Activated CD4-positive, alpha-beta memory T cell treated with anti-CD3 and anti-CD28 coated beads, Interleukin-2, amount 10 ng/mL, durations not matched to agents 7 days and 5 days (primary cell): ENCODE measurements at regions of chr16 and their contacts with region 1.

Region 1: GRCh38 chr16:53346-54236 is at the starts of genes POLR3K and SNRNP25:
- DNase-seq: peak; percentile 98
- H3K4me3 Mint-ChIP-seq: peak within 1 kb of the TSS; percentile 98
- H3K27ac Mint-ChIP-seq: peak within 1 kb of the TSS; percentile 86
- H3K4me1 Mint-ChIP-seq: peaks cover 34% of the 10 kb centered on the region
- H3K27me3 Mint-ChIP-seq: no peaks in the 10 kb centered on the region
- total RNA-seq, gene POLR3K: 27.6 to 31.1 TPM
- total RNA-seq, gene SNRNP25: 29.7 to 33.4 TPM

Region 2: GRCh38 chr16:38939-39892 is 14.4 kb before region 1 on chr16:
- CTCF ChIA-PET with region 1: interaction called, 5 read pairs
- POLR2A ChIA-PET with region 1: interaction called, 16 read pairs
- DNase-seq: peak; percentile 80
- H3K4me3 Mint-ChIP-seq: no peak overlapping the region
- H3K27ac Mint-ChIP-seq: peak overlapping the region; percentile 47
- H3K4me1 Mint-ChIP-seq: peaks cover 46% of the 10 kb centered on the region
- H3K27me3 Mint-ChIP-seq: no peaks in the 10 kb centered on the region

Region 3: DNA sequence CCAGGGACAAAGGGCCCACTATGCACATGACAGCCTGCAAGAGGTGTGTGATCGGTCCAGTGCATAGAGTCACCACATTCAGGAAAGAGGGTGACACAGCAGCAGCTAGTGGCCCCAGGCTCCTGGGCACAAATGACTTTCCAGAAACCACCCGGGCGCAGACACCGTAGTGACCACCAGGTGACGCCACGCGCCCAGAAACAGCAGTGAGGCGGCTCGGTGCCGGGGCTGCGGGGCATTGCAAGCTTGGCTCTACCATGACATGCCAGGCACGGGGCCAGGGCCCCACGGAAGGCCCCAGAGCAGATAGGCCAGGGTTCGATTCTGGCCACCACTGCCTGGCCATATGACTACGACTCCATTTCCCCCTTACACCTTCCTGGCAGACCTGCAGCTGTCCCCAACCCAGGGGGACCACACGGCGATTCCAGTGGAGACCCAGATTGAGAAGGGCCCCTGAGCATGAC is 12.1 kb after region 1 on chr16:
- CTCF ChIA-PET with region 1: interaction called, 21 read pairs
- POLR2A ChIA-PET with region 1: interaction called, 11 read pairs
- DNase-seq: peak; percentile 89
- H3K4me3 Mint-ChIP-seq: no peak overlapping the region
- H3K27ac Mint-ChIP-seq: no peak overlapping the region
- H3K4me1 Mint-ChIP-seq: peaks cover 2% of the 10 kb centered on the region
- H3K27me3 Mint-ChIP-seq: peaks cover 13% of the 10 kb centered on the region

Region 4: DNA sequence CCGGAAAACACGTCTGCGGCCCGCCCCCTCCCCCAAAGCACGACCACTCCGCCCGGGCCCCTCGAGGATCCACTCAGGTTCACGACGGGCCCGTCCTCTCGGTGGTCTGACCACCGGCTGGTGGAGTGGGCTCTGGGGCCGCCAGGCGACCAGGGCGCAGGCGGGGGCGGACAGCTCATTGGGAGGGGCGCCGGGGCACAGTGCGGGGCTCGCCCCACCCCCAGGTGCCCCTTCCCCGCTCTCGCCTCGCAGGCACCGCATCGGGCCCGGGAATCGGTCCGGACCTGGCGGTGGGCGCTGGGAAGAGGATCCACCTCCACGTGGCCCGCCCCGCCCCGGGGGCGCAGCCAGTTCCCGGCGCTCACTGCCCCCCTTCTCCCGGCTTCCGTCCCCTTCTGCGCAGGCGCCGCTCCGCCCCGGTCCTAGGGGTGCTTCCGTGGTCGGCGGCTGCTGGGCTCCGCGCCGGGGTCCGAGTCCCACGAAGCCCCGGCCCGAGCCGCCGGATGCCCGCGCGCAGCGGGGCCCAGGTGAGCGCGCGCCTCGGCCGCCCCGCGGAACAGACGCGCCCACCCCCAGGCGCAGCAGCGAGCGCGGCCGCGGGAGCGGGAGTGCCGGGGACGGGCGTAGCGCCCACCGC is 24.3 kb after region 1 on chr16 and contains the start of gene MPG:
- CTCF ChIA-PET with region 1: interaction called, 3 read pairs
- POLR2A ChIA-PET with region 1: interaction called, 18 read pairs
- DNase-seq: peak; percentile 85
- H3K4me3 Mint-ChIP-seq: peak within 1 kb of the TSS; percentile 84
- H3K27ac Mint-ChIP-seq: peak within 1 kb of the TSS; percentile 82
- H3K4me1 Mint-ChIP-seq: peaks cover 33% of the 10 kb centered on the region
- H3K27me3 Mint-ChIP-seq: peaks cover 18% of the 10 kb centered on the region
- total RNA-seq, gene MPG: 59.9 to 64.3 TPM

Region 5: DNA sequence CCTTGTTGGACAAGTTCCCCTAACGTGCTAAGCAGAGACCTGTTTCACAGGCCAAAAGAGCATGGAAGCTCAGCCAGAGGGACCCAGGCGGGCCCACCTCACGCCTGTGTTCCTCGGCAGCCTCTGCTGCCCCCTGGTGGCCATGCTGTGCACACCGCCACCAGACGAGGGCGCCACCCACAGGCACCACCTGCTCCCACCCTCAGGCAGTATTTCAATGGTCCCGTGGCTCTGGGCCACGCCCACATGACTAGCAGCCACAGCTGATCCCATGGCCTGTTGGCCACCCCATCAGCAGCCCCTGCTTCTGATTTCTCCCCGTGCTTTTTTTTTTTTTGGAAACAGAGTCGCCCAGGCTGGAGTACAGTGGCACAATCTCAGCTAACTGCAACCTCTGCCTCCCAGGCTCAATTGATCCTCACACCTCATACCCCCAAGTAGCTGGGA is 43.4 kb after region 1 on chr16:
- CTCF ChIA-PET with region 1: interaction called, 12 read pairs
- POLR2A ChIA-PET with region 1: no interaction called
- DNase-seq: peak; percentile 92
- H3K4me3 Mint-ChIP-seq: no peak overlapping the region
- H3K27ac Mint-ChIP-seq: no peak overlapping the region
- H3K4me1 Mint-ChIP-seq: peaks cover 5% of the 10 kb centered on the region
- H3K27me3 Mint-ChIP-seq: no peaks in the 10 kb centered on the region

Region 6: DNA sequence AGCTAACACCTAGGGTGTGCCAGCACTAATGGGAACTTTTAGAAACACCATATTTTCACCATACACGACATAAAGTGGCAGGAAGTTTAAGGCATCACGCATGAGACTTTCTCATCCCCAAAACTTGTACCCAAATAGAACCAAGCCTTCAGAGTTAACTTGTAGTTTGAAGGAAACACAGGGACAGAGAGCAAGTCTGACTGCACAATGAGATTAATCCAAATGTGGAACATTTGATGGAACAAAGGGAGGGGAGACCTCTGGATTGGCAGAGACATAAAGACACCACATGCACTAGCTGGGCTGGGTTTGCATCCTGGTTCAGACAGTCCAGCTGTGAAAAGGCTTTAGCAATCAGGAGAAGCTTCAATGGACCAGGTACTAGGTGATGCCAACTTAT is 60.7 kb after region 1 on chr16:
- CTCF ChIA-PET with region 1: no interaction called
- POLR2A ChIA-PET with region 1: no interaction called
- DNase-seq: no peak
- H3K4me3 Mint-ChIP-seq: no peak overlapping the region
- H3K27ac Mint-ChIP-seq: no peak overlapping the region
- H3K4me1 Mint-ChIP-seq: peaks cover 12% of the 10 kb centered on the region
- H3K27me3 Mint-ChIP-seq: no peaks in the 10 kb centered on the region

Region 7: DNA sequence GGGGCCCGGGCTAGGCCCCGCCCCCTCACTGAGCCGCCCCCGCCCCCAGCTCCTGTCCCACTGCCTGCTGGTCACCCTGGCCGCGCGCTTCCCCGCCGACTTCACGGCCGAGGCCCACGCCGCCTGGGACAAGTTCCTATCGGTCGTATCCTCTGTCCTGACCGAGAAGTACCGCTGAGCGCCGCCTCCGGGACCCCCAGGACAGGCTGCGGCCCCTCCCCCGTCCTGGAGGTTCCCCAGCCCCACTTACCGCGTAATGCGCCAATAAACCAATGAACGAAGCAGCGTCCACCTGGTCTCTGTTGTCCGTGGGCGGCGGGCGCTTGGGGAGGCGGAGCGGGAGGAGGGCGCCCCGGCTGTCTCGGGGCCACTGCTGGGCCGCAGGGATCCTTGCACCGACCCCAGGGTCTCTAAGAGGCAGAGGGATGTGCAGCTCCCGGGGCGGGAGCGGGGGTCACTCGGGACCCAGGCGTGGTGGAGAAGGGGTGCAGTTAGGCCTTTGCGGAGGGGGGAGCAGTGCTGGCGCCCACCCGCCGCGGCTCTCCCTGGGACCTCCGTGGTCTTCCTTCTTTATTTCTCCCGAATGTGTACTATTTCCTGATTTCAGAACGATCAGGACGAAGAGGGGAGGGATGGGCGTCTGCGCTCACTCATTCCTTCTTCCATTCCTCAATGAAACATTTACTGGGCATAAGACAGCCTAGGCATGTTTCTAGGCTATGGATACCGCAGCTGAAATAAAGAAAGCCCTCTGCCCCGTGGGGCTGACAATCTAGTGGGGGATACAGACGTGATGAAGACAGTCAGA is 100.8 kb after region 1 on chr16:
- CTCF ChIA-PET with region 1: no interaction called
- POLR2A ChIA-PET with region 1: no interaction called
- DNase-seq: no peak
- H3K4me3 Mint-ChIP-seq: peak overlapping the region; percentile 32
- H3K27ac Mint-ChIP-seq: no peak overlapping the region
- H3K4me1 Mint-ChIP-seq: peaks cover 7% of the 10 kb centered on the region
- H3K27me3 Mint-ChIP-seq: peaks cover 35% of the 10 kb centered on the region